HEK293 (cell line): ENCODE measurements at regions of chr11 and their contacts with region 1.

Region 1: GRCh38 chr11:67583247-67584204 is at the start of gene GSTP1:
- H3K4me3 ChIP-seq: peak within 1 kb of the TSS; percentile 72
- H3K27ac ChIP-seq: peak within 1 kb of the TSS; percentile 66; the same call in 1 of the 2 replicates
- H3K4me1 ChIP-seq: no peaks in the 10 kb centered on the region
- CTCF ChIP-seq: no peak

Region 2: GRCh38 chr11:67572747-67573419 is 10.6 kb before region 1 on chr11:
- CTCF ChIA-PET with region 1: interaction called, 23 read pairs
- POLR2A ChIA-PET with region 1: interaction called, 4 read pairs
- H3K4me3 ChIP-seq: no peak overlapping the region
- H3K27ac ChIP-seq: no peak overlapping the region
- H3K4me1 ChIP-seq: no peaks in the 10 kb centered on the region
- CTCF ChIP-seq: peak; percentile 30; the same call in 1 of the 2 replicates

Region 3: DNA sequence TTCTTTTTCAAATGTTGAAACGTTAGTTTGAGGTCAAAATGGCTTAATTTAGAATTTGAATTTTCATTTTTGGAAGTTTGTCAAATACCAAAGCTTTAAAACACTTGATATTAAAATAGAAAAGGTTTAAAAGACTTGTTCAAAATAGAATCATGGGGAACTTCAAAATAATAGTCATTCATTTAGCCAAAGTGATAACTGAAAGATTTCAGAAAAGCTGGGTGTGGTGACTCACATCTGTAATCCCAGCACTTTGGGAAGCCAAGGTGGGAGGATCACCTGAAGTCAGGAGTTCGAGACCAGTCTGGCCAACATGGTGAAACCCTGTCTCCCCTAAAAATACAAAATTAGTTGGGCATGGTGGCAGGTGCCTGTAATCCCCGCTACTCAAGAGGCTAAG is 11.0 kb after region 1 on chr11:
- CTCF ChIA-PET with region 1: interaction called, 11 read pairs
- POLR2A ChIA-PET with region 1: interaction called, 4 read pairs
- H3K4me3 ChIP-seq: no peak overlapping the region
- H3K27ac ChIP-seq: no peak overlapping the region
- H3K4me1 ChIP-seq: no peaks in the 10 kb centered on the region
- CTCF ChIP-seq: no peak